AG04449 (cell line): ENCODE measurements at regions of chr3 and their contacts with region 1.

Region 1: GRCh38 chr3:133805527-133806475 is at the start of gene SRPRB:
- DNase-seq: peak; percentile 52
- H3K4me3 ChIP-seq: peak within 1 kb of the TSS; percentile 98
- CTCF ChIP-seq: no peak

Region 2: DNA sequence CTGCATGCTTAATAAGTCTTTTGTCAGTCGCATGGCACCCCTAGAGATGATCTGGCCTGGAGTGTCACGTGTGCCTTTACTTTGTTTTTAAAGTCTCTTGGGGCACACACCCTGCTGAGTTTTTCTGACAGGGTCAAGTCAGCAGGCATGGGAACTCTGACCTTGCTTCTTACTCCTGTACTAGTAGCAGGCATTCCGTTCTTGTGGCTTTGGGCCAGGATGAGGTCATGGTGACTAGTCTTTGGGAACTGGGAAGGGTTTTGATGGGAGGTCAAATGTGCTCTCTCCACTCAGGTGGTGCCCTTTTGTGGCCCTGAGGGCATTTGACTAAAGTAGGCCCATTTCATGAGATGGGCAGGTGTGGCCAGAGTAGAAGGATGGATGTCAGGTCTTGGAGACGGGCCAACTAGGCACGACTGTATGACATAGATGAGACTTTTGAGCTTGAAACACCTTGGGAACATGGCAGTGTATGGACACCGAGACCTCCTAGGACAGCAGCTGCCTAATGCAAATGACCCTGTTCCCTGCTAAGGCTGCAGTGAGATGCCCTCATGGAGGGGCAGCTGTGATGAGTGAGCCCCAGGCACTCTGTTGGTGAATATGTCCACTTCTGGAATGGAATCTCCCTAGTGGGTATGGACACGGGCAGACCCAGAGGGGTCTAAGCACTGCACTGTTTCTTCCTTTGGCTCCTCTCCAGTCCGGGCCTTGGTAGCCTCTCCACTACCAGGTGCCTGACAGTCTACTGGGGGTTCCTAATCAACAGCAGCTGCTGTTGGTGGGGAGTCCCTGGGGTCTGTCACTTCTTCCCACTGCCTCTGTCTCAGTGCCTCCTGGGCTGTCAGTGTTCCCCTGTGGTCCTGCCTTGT is 16.2 kb after region 1 on chr3:
- CTCF ChIA-PET with region 1: interaction called, 39 read pairs
- POLR2A ChIA-PET with region 1: no interaction called
- DNase-seq: no peak
- H3K4me3 ChIP-seq: no peak overlapping the region
- CTCF ChIP-seq: no peak

Region 3: GRCh38 chr3:133943639-133944141 is 137.9 kb after region 1 on chr3:
- CTCF ChIA-PET with region 1: no interaction called
- POLR2A ChIA-PET with region 1: no interaction called
- DNase-seq: peak; percentile 68
- H3K4me3 ChIP-seq: no peak overlapping the region
- CTCF ChIP-seq: no peak